ENCODE measurements at regions of chr17 and their contacts with region 1.

Region 1: GRCh38 chr17:4498461-4499397 is at the start of gene SPNS2:
- DNase-seq: peak; percentile 72 to 98 (median 80)

Region 2: GRCh38 chr17:4540224-4540641 is 41.5 kb after region 1 on chr17:
- intact Hi-C with region 1: loop called (anchors 5 kb)
- DNase-seq: peak in 1 of 10 donors; percentile 77